ENCODE measurements at regions of chr4 and their contacts with region 1.

Region 1: DNA sequence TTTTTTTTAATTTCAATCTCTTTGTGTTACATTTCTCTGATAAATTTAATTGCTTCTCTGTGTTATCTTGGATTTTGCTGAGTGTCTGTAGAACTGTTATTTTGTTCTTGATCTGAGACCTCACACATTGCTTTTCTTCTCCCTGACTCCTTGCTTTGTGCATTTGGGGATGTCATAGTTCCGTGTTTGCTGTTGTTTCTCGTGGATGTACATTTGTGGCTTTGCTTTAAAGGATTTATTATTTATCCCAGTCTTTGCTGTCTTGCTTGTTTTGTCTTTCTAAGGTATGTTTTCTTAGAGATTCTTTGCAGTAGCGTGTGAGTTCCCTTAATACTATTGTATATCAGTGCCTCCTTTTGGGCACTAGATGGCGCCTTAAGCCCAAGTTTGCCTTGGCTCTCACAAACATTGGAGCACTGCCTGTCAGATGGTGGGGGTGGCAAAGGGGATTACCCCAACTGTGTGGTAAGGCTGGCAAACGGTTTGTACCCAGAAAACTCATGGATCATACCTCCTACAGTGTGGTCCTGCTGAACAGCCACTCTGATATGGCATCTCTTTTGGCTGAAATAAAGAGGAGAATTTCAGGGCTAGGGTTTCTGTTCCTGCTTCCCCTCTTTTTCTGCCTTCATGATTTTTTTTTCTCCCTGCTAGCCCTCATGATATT is 96.4 kb downstream of the PGRMC2 start:
- DNase-seq: peak; percentile 77
- ATAC-seq: peak; percentile 98
- H3K4me3 ChIP-seq: no peak overlapping the region
- H3K27ac ChIP-seq: peak overlapping the region; percentile 9
- H3K4me1 ChIP-seq: peaks cover 5% of the 10 kb centered on the region
- H3K27me3 ChIP-seq: no peaks in the 10 kb centered on the region
- CTCF ChIP-seq: peak; percentile 92
- POLR2A ChIP-seq: no peak
- RAD21 ChIP-seq: peak; percentile 95

Region 2: GRCh38 chr4:128454281-128455075 is 263.2 kb after region 1 on chr4:
- CTCF ChIA-PET with region 1: interaction called, 6 read pairs
- POLR2A ChIA-PET with region 1: no interaction called
- dilution Hi-C with region 1: no loop called
- in situ Hi-C with region 1: loop called (anchors 10 kb)
- intact Hi-C with region 1: loop called (anchors 1 kb)
- DNase-seq: peak; percentile 97
- ATAC-seq: peak; percentile 95
- H3K4me3 ChIP-seq: peak overlapping the region; percentile 10; the same call in 1 of the 2 replicates
- H3K27ac ChIP-seq: peak overlapping the region; percentile 77
- H3K4me1 ChIP-seq: peaks cover 20% of the 10 kb centered on the region
- H3K27me3 ChIP-seq: no peaks in the 10 kb centered on the region
- CTCF ChIP-seq: peak; percentile 95
- POLR2A ChIP-seq: peak; percentile 44; the same call in 1 of the 2 replicates
- RAD21 ChIP-seq: peak; percentile 98

Region 3: GRCh38 chr4:128574706-128575105 is 383.5 kb after region 1 on chr4:
- CTCF ChIA-PET with region 1: no interaction called
- POLR2A ChIA-PET with region 1: no interaction called
- dilution Hi-C with region 1: no loop called
- in situ Hi-C with region 1: loop called (anchors 25 kb)
- intact Hi-C with region 1: no loop called
- DNase-seq: peak; percentile 68
- ATAC-seq: peak; percentile 25
- H3K4me3 ChIP-seq: no peak overlapping the region
- H3K27ac ChIP-seq: no peak overlapping the region
- H3K4me1 ChIP-seq: peaks cover 22% of the 10 kb centered on the region
- H3K27me3 ChIP-seq: no peaks in the 10 kb centered on the region
- CTCF ChIP-seq: peak; percentile 58
- POLR2A ChIP-seq: no peak
- RAD21 ChIP-seq: peak; percentile 55

Region 4: DNA sequence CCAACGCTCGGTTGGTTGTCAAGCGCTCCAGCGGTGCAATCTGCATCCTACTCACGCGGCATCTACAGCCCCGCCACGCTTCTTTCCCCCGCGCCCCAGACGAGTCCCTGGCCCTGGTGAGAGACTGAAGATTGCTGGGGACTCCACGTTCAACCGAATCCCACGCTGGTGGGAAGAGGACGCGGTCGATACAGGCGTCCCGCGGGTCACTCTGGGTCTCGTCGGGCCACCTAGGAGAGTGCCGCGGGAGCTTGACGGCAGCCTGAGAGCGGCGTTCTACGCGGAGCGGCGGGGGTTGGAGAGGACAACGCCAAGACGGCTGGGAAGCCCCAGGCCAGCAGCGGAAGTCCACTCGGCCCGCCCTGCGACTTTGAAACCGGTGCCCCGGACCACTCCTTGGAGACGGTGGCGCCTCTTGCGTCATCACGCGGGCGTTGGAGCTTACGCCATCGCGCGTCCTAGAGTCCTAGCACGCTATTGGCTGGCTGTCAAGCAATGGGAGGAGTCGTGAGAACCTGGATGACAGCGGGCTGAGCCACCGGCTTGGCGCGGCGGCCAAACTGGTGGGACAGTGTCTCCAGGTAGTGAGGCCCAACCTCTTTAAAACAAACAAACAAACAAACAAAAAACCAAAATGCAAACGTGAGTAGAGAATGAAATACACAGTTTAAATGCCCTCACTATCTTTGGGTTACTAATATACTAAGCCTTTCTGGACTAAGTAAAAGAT is 902.1 kb after region 1 on chr4 and contains the start of gene SCLT1:
- CTCF ChIA-PET with region 1: no interaction called
- POLR2A ChIA-PET with region 1: no interaction called
- dilution Hi-C with region 1: no loop called
- in situ Hi-C with region 1: no loop called
- intact Hi-C with region 1: loop called (anchors 10 kb)
- DNase-seq: peak; percentile 99
- ATAC-seq: peak; percentile 96
- H3K4me3 ChIP-seq: peak within 1 kb of the TSS; percentile 87
- H3K27ac ChIP-seq: peak within 1 kb of the TSS; percentile 86
- H3K4me1 ChIP-seq: no peaks in the 10 kb centered on the region
- H3K27me3 ChIP-seq: no peaks in the 10 kb centered on the region
- CTCF ChIP-seq: no peak
- POLR2A ChIP-seq: peak; percentile 93
- RAD21 ChIP-seq: no peak
- total RNA-seq, gene SCLT1: 7.7 and 15.3 TPM in 2 replicates

Region 5: DNA sequence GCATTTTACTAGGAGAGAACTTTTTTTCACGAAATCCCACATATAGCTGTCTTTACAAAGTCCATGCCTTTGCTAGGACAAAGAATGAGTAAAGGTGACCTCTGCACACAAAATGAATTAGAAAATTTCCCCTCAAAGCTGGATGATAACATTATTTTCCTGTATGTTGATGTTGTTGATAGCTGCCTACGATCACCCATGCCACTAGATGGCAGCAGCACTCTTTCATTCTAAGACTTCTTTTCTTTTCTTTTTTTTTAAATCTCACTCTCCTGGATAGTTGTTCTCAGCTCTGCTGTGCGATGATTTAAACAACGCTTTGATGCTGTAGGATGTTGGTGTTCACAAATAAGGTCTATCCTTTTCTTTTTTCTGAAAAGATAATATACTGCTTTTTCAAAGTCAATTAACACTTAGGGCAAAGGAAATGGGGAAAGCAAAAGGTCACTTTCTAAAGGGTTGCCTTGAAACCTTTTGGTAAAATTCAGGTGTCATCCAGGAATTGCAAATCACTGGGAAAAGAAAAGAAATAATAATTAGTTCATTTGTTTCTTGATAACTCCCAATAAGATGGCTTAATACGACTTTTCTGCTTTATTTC is 1171.5 kb after region 1 on chr4:
- CTCF ChIA-PET with region 1: no interaction called
- POLR2A ChIA-PET with region 1: no interaction called
- dilution Hi-C with region 1: no loop called
- in situ Hi-C with region 1: no loop called
- intact Hi-C with region 1: loop called (anchors 5 kb)
- DNase-seq: peak; percentile 60
- ATAC-seq: peak; percentile 67
- H3K4me3 ChIP-seq: no peak overlapping the region
- H3K27ac ChIP-seq: no peak overlapping the region
- H3K4me1 ChIP-seq: no peaks in the 10 kb centered on the region
- H3K27me3 ChIP-seq: peaks cover 8% of the 10 kb centered on the region
- CTCF ChIP-seq: peak; percentile 78
- POLR2A ChIP-seq: no peak
- RAD21 ChIP-seq: peak; percentile 74

Region 6: DNA sequence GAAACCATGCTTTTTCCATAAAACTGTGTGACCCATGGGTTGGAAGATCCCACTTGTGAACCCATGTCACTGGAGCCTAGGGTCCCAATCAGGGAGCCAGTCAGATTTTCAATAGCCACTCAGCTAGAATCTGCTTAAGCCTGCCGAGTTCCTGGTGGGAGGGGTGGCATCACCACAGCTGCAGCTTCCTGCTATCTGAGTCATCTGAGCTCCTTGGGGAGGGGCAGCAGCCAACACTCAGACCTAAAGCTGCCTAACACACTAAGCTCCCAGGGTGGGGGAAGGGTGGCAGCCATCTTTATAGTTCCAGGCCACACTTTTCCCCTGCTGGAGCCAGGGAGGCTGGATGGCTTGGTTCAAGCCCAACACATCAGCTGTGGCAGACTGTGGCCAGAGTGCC is 1254.8 kb after region 1 on chr4:
- CTCF ChIA-PET with region 1: no interaction called
- POLR2A ChIA-PET with region 1: no interaction called
- dilution Hi-C with region 1: no loop called
- in situ Hi-C with region 1: no loop called
- intact Hi-C with region 1: no loop called
- DNase-seq: no peak
- ATAC-seq: no peak
- H3K4me3 ChIP-seq: no peak overlapping the region
- H3K27ac ChIP-seq: no peak overlapping the region
- H3K4me1 ChIP-seq: no peaks in the 10 kb centered on the region
- H3K27me3 ChIP-seq: no peaks in the 10 kb centered on the region
- CTCF ChIP-seq: no peak
- POLR2A ChIP-seq: no peak
- RAD21 ChIP-seq: no peak

Measured in IMR-90 (cell line).